Activated CD4-positive, alpha-beta memory T cell treated with anti-CD3 and anti-CD28 coated beads for 36 hours (primary cell): ENCODE measurements at regions of chr15 and their contacts with region 1.

Region 1: DNA sequence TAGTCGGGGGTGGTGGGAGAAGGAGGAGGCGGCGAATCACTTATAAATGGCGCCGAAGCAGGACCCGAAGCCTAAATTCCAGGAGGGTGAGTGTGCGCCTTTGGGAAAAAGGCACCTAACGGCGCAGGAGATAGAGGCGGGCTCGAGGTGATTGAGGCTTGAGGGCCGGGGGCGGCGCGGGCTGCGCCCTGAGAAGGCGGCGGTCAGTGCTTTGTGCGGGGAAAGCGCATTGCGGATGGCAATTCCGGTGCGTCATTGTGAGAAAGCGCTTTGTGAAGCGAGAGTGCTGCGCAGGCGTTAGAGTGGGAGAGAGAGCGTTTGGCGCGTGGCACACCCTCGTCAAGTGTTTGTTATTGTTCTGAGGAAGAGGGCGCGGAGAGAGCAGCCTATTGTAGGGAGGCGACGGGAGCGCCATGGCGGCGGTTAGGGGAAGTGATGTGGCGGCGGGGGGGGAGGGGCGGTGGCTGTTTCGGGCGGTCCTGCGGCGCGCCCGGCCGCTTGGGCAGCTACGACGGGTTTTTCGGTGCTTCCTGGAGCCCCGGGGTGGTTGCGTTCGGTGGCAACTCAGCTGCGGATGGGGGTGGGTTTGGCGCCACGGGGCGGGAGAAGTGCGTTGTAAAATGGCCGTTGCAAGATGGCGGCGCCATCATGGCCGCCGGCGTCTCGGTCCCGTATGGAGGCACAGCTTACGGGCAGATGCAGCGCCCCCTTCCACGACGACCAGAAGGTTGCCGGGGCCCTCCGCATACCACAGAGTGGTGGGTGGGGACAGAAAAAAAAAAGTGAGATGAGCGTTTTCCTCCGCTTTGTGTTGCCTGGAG is 492 bp downstream of the MORF4L1 start:
- DNase-seq: peak; percentile 94
- H3K4me3 Mint-ChIP-seq: peak overlapping the region; percentile 90
- H3K27ac Mint-ChIP-seq: peak overlapping the region; percentile 99
- H3K4me1 Mint-ChIP-seq: peaks cover 37% of the 10 kb centered on the region
- H3K27me3 Mint-ChIP-seq: no peaks in the 10 kb centered on the region

Region 2: DNA sequence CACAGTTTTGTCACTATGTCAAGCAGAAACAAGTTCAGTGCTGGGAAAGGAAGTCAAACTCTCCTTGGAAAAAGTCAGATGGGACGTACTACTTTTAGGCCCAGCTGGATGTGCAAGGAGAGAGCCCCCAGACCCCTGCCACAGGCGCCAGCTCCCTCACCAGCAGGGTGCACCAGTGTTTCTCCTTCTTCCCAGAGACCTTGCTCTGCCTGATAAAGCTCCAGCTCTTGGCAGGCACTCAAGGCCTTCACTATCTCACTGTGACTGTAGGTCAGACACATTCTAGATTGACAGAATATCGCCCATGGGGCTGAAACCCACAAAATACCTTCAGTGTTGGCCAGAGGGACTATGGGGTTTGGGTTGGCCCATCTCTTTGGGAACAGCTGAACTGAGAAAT is 177.3 kb before region 1 on chr15:
- CTCF ChIA-PET with region 1: no interaction called
- POLR2A ChIA-PET with region 1: no interaction called
- intact Hi-C with region 1: no loop called
- DNase-seq: no peak
- H3K4me3 Mint-ChIP-seq: no peak overlapping the region
- H3K27ac Mint-ChIP-seq: no peak overlapping the region
- H3K4me1 Mint-ChIP-seq: no peaks in the 10 kb centered on the region
- H3K27me3 Mint-ChIP-seq: peaks cover under 1% of the 10 kb centered on the region

Region 3: GRCh38 chr15:78761891-78762385 is 111.2 kb before region 1 on chr15:
- CTCF ChIA-PET with region 1: no interaction called
- POLR2A ChIA-PET with region 1: interaction called, 3 read pairs
- intact Hi-C with region 1: loop called (anchors 2 kb)
- DNase-seq: no peak
- H3K4me3 Mint-ChIP-seq: no peak overlapping the region
- H3K27ac Mint-ChIP-seq: peak overlapping the region; percentile 83
- H3K4me1 Mint-ChIP-seq: peaks cover 22% of the 10 kb centered on the region
- H3K27me3 Mint-ChIP-seq: no peaks in the 10 kb centered on the region

Region 4: GRCh38 chr15:78842519-78842918 is 30.7 kb before region 1 on chr15:
- CTCF ChIA-PET with region 1: no interaction called
- POLR2A ChIA-PET with region 1: no interaction called
- intact Hi-C with region 1: no loop called
- DNase-seq: no peak
- H3K4me3 Mint-ChIP-seq: no peak overlapping the region
- H3K27ac Mint-ChIP-seq: no peak overlapping the region
- H3K4me1 Mint-ChIP-seq: peaks cover 2% of the 10 kb centered on the region
- H3K27me3 Mint-ChIP-seq: no peaks in the 10 kb centered on the region

Region 5: GRCh38 chr15:78859971-78860732 is 13.0 kb before region 1 on chr15:
- CTCF ChIA-PET with region 1: interaction called, 16 read pairs
- POLR2A ChIA-PET with region 1: interaction called, 12 read pairs
- intact Hi-C with region 1: loop called (anchors 1 kb)
- DNase-seq: peak; percentile 85
- H3K4me3 Mint-ChIP-seq: peak overlapping the region; percentile 73
- H3K27ac Mint-ChIP-seq: peak overlapping the region; percentile 62
- H3K4me1 Mint-ChIP-seq: peaks cover 6% of the 10 kb centered on the region
- H3K27me3 Mint-ChIP-seq: no peaks in the 10 kb centered on the region

Region 6: DNA sequence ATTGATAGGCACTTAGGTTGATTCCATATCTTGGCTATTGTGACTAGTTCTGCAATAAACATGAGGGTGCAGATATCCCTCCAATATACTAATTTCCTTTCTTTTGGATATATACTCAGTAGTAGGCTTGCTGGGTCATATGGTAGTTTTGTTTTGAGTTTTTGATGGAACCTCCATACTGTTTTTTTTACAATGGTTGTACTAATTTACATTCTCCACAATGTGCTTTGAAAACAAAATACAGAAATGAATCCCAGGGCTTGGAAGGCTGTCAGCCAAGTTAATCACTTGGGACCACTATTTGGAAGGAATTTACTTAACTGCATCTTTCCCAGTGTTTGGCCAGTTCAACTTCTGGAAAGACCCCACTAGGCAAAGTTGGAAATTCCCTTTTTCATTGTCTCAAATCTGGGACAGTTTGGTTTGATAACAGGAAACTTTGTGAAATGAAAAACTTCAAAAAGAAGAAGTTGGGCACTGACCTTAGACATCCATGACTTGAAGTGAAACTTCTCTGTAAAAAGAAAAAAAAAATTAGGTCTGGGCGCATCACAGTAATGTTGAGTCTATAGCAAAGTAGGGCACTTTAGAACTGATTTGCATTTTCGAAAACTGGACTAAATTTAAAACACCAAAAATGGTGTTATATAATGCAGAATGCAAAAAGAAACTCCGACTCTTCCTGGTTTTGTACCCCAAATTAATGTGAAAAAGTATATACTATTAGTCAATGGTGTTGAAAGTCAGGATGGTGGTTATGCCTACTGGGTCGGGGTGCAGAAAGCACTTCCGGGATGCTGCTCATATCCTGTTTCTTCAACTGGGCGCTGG is 65.7 kb after region 1 on chr15:
- CTCF ChIA-PET with region 1: interaction called, 7 read pairs
- POLR2A ChIA-PET with region 1: interaction called, 3 read pairs
- intact Hi-C with region 1: loop called (anchors 2 kb)
- DNase-seq: peak; percentile 71
- H3K4me3 Mint-ChIP-seq: peak overlapping the region; percentile 55
- H3K27ac Mint-ChIP-seq: peak overlapping the region; percentile 92
- H3K4me1 Mint-ChIP-seq: peaks cover 58% of the 10 kb centered on the region
- H3K27me3 Mint-ChIP-seq: no peaks in the 10 kb centered on the region

Region 7: DNA sequence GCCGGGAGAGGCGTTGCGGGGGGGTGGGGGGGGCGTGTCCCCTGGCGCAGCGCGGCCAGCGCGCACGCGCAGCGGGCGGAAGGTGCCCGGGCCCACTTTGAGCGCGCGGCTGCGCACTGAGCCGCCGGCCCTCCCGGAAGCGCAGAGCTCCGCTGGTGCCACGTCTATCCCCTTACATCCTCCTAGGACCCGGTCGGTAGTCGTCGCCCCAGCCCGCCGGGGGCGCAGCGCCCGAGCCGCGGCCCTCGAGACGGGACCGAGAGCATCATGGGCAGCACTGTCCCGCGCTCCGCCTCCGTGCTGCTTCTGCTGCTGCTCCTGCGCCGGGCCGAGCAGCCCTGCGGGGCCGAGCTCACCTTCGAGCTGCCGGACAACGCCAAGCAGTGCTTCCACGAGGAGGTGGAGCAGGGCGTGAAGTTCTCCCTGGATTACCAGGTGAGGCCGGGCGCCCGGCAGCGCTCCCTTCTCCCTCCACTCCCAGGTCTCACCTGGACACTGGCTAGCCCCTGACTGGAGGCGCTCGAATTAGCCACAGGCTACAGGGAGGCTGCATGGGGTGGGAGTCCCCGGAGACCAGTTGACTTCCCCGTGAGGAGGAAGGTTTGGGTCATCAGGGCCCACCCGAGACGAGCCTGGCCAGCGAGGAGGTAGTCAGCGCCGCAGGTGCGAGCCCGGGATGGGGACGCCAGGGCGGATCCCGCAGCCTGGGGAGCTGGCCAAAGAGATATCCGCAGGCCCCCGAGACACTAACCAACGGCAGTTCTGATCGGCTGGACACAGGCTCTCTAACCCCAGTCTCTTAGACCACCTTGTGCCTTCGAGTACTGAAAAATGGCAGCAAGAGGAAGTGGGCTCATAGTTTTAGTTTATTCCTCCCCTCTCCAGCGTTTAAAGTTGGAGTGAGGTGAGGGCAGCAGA is 438.1 kb after region 1 on chr15 and contains the start of gene TMED3:
- CTCF ChIA-PET with region 1: no interaction called
- POLR2A ChIA-PET with region 1: no interaction called
- intact Hi-C with region 1: loop called (anchors 5 kb)
- DNase-seq: peak; percentile 90
- H3K4me3 Mint-ChIP-seq: peak within 1 kb of the TSS; percentile 87
- H3K27ac Mint-ChIP-seq: no peak within 1 kb of the TSS
- H3K4me1 Mint-ChIP-seq: peaks cover 30% of the 10 kb centered on the region
- H3K27me3 Mint-ChIP-seq: peaks cover 15% of the 10 kb centered on the region
- total RNA-seq, gene TMED3: 37.8 to 40.1 TPM